ENCODE measurements at regions of chr18 and their contacts with region 1.

Region 1: GRCh38 chr18:62522504-62523254 is at the start of gene ZCCHC2:
- DNase-seq: peak; percentile 99
- H3K4me3 Mint-ChIP-seq: peak within 1 kb of the TSS; percentile 98
- H3K27ac Mint-ChIP-seq: peak within 1 kb of the TSS; percentile 94
- H3K4me1 Mint-ChIP-seq: peaks cover 35% of the 10 kb centered on the region
- H3K27me3 Mint-ChIP-seq: peaks cover 4% of the 10 kb centered on the region
- total RNA-seq, gene ZCCHC2: 55.7 and 58.8 TPM in 2 replicates

Region 2: DNA sequence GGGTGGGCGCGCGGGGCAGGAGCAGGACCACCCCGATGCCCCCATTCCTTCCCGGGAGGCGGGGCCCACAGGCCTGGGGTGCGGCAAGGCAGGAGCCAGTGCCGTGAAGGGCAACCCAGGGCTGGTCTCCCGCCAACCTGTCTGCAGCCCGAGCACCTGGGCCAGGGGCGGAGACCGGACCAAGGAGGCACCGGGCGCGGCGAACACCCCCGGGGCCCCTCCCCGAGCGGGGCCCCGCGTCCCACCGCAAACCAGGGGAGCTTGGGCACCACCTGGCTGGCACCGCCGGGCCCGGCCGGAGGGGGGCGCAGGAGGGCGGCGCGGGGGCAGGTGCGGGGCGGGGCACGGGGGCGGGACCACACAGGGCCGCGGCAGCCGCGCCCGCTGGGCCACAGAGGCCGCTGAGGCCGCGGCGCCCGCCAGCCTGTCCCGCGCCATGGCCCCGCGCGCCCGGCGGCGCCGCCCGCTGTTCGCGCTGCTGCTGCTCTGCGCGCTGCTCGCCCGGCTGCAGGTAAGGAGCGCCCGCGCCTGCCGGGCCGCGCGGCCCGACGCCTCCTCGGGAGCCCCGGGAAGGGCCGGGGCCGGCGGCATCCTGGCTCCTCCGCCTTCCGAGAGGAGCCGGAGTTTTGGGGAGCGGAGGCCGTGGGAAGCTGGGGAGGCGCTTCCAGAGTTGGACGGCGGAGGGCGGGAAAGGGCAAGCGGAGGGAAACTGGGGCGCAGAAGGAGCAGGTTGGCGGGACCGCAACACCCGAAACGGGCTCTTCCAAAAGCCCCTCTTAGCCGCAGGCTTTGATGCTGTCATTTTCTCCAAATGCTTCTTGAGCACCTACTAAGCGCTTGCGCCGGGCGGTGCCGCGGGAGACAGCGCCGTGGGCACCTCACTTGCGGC is 197.5 kb before region 1 on chr18 and contains the start of gene TNFRSF11A:
- intact Hi-C with region 1: loop called (anchors 1 kb)
- DNase-seq: peak; percentile 62
- H3K4me3 Mint-ChIP-seq: peak within 1 kb of the TSS; percentile 97
- H3K27ac Mint-ChIP-seq: peak within 1 kb of the TSS; percentile 87
- H3K4me1 Mint-ChIP-seq: peaks cover 62% of the 10 kb centered on the region
- H3K27me3 Mint-ChIP-seq: peaks cover 34% of the 10 kb centered on the region
- total RNA-seq, gene TNFRSF11A: 22.9 and 27.1 TPM in 2 replicates

Region 3: DNA sequence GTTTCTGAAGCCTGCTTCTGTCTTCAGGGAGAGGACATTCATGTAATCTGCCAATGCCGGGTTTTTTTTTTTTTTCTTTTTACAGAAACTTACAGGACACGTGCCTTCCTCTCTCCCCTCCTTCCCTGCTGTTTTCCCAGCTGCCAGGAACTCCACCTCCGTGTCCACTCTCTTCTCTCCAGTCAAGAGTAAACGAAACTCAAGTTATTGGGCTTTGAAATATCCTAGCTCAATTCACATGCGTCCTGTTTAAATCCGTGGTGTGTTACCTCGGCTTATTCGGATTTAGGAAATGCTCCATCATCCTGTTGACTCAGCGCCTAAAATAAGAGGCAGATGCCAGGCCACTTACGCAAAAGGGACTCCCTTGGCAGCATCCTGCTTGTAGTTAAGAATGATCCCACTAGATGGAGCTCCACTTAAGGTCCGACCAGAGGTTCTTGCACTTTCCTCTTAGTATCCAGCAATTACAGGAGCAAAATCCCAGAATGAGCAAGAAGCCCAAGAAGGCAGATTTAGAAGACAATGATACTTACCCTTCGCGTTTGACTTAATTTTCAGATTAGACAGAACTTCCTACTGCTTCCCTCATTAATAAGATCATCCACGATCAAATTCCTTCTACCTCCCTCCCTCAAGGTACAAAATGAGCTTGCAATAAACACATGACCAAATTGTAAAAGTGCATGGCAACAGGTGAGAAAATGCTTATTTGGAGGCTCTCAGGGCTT is 97.0 kb before region 1 on chr18:
- intact Hi-C with region 1: loop called (anchors 1 kb)
- DNase-seq: peak; percentile 56
- H3K4me3 Mint-ChIP-seq: peak overlapping the region; percentile 19
- H3K27ac Mint-ChIP-seq: peak overlapping the region; percentile 69
- H3K4me1 Mint-ChIP-seq: peaks cover 44% of the 10 kb centered on the region
- H3K27me3 Mint-ChIP-seq: no peaks in the 10 kb centered on the region

Region 4: GRCh38 chr18:62499263-62499650 is 23.4 kb before region 1 on chr18:
- intact Hi-C with region 1: no loop called
- DNase-seq: no peak
- H3K4me3 Mint-ChIP-seq: no peak overlapping the region
- H3K27ac Mint-ChIP-seq: no peak overlapping the region
- H3K4me1 Mint-ChIP-seq: no peaks in the 10 kb centered on the region
- H3K27me3 Mint-ChIP-seq: peaks cover 15% of the 10 kb centered on the region

Region 5: DNA sequence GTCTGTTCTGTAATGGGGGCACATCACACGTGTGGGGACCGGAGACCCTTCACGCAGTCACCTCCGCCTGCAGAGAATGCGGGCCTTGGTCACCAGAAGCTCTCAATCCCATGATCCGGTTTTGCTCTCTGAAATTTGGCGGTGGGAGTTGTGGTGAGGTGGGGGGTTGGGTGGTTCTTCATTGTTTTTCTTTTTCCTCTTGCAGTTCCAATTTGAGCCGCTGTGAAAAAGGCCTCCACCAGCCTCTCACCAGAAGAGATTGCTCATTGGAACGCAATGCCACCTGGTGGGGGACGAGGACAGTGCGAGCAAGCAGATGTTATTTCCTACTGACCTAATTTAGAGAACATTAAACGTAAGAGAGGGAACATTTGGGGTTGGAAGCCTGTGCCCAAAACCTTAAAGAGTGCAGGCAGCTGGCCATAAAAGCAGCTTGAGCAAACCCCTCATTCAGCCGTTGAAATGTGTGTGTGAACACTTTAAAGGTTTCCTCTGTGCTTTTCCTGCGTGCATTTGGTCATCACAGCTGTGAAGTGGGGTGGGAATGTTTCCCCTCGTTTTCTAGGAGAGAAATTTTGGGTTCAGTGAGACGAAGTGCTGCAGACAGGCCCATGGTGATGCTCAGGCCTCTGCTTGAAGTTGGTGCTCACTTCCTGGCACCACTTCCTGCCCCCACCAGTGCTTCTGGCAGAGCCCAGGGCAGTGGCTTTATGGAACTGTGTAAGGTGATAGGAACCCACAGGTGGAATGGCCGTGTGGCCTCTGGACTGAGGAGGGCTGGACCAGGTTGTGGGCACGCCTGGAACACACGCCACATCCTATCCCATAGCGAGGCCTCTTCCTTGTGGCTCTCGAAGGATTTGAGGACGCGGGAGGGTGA is 61.8 kb after region 1 on chr18:
- intact Hi-C with region 1: loop called (anchors 1 kb)
- DNase-seq: peak; percentile 75
- H3K4me3 Mint-ChIP-seq: peak overlapping the region; percentile 0
- H3K27ac Mint-ChIP-seq: peak overlapping the region; percentile 61
- H3K4me1 Mint-ChIP-seq: peaks cover 44% of the 10 kb centered on the region
- H3K27me3 Mint-ChIP-seq: no peaks in the 10 kb centered on the region

Region 6: DNA sequence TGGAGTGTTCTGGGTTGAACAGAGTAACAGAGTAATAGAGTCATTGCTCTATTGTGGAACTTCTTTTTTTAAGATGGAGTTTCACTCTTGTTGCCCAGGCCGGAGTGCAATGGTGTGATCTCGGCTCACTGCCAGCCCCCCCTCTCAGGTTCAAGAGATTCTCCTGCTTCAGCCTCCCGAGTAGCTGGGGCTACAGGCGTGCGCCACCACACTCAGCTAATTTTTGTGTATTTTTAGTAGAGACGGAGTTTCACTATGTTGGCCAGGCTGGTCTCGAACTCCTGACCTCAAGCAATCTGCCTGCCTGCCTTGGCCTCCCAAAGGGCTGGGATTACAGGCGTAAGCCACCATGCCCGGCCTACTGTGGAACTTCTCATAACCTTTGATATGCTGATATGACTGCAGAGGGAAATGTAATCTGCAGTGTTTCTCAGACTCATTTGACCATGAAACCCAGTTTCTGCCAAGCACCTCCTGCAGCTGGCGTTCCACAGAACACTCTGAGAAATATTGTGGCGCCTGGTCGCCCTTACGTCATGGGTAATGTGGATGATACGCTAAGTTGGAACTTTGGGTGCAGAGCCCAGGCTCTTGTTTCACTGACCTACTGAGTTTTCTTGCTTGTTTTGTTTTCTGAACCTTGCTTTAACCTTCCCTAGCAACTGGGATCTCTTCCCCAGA is 583.1 kb after region 1 on chr18:
- intact Hi-C with region 1: loop called (anchors 1 kb)
- DNase-seq: no peak
- H3K4me3 Mint-ChIP-seq: no peak overlapping the region
- H3K27ac Mint-ChIP-seq: no peak overlapping the region
- H3K4me1 Mint-ChIP-seq: peaks cover 37% of the 10 kb centered on the region
- H3K27me3 Mint-ChIP-seq: peaks cover 20% of the 10 kb centered on the region

Region 7: DNA sequence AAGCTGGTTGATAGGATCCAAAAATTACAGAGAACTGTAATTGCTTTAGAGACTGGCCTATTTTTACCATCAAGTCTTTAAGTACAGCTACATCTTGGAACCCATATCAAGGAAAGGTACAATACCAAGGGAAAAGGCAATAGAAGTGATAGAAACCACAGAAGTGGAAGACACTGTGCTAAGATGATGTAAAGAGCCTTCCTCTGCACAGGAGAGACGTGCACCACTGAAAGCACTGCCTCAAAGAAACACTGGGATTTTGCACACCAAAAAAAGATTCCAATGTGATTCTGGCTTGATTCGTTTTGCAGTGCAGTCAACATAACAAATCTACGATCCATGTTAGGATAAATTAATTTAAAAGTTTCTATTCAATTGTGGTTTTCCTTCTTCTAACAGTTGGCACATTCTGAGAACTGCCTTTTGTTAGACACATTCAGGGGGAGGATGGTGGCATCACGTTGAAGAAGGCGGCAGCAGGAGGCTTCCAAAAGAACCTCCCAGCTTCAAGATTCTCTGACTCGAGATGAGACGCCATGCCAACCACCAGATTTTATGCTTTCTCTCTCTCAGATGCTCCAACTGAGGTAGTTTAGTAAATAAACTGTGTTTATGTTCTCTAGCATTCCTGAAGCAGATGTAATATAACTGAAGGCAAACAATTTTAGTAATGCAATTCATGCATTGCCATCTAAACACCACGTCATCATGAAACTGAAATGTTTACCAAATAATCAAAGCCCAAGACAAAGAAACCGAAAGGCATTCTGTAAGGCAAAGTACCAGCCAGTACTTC is 694.0 kb after region 1 on chr18:
- intact Hi-C with region 1: loop called (anchors 10 kb)
- DNase-seq: no peak
- H3K4me3 Mint-ChIP-seq: peak overlapping the region; percentile 67
- H3K27ac Mint-ChIP-seq: peak overlapping the region; percentile 89
- H3K4me1 Mint-ChIP-seq: peaks cover 94% of the 10 kb centered on the region
- H3K27me3 Mint-ChIP-seq: no peaks in the 10 kb centered on the region

Region 8: DNA sequence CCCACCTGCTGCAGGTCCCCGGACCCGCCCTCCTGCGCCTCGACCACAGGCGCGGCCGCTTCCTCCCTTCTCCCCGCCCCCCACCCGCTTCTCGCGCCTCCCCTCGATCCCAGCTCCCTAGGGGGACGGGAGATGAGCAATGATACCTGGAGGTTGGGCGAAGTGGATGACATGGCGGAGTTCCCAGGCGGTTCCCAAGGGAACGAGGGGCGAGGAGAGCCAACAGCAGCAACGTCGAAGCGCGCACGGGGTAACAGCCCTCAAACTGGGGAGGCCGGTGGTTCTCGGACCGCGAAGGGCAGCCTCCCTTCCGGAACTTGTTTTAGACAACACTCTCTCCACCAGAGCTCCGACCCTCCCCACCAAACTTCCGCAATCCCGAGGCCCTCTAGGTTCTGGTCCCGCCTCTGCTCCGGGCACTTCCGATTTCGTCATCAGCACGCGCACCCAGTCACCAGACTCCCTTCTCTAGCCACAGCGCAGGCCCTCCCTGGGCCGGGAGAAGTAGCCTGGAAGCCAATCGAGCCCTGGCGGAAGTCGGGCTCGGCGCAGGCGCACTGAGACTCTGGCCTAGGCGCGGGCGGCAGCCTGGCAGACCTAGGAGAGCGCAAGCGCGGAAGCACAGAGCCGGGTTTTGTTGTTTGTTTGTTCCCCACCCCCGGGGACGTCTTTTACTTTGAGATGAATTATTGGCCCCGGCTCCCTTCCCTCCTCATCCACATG is 899.6 kb after region 1 on chr18 and contains the start of gene VPS4B:
- intact Hi-C with region 1: loop called (anchors 2 kb)
- DNase-seq: peak; percentile 100
- H3K4me3 Mint-ChIP-seq: peak within 1 kb of the TSS; percentile 91
- H3K27ac Mint-ChIP-seq: peak within 1 kb of the TSS; percentile 92
- H3K4me1 Mint-ChIP-seq: peaks cover 18% of the 10 kb centered on the region
- H3K27me3 Mint-ChIP-seq: no peaks in the 10 kb centered on the region
- total RNA-seq, gene VPS4B: 58.6 and 60.7 TPM in 2 replicates